ENCODE measurements at regions of chr16 and their contacts with region 1.

Region 1: DNA sequence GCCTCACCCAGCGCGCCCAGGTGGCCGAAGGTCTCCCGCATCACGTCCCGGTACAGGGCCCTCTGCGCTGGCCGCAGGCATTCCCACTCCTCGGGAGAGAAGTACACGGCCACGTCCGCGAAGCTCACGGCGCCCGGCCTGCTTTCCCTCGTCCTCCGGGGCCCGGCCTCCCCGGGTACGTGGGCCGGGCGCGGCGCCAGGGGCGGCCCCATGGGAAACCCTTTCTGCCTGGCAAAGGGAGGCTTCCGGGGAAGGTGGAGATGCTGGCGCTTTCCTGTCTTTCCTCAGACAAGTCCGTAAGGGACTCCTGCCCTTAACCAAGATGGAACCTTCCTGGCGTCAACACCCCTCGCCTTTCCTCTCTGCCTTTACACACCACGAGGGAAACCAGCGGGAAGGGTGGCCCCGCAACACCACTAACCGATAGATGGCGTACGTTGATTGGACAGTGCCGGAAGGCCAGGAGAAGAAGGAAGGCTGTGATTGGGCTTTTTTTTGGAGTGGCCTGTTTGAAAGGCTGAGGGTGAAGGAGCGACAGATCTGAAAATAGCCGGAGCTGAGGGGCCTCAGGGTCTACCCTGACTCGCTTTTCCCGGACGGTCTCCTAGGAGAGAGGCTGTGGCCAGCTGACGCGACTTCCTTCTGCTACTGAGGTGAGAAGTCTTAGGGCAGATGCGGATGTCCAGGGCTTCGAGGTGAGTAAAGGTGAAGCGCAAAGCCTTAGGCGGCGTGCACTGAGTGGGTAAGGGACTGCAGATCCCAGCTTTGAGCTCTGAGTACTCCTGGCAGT is at the start of gene ZNF785:
- DNase-seq: peak; percentile 96
- H3K4me3 Mint-ChIP-seq: peak within 1 kb of the TSS; percentile 77
- H3K27ac Mint-ChIP-seq: peak within 1 kb of the TSS; percentile 61
- H3K4me1 Mint-ChIP-seq: peaks cover 36% of the 10 kb centered on the region
- H3K27me3 Mint-ChIP-seq: no peaks in the 10 kb centered on the region
- total RNA-seq, gene ZNF785: 12.9 to 13.3 TPM

Region 2: GRCh38 chr16:30395992-30396585 is 189.5 kb before region 1 on chr16:
- CTCF ChIA-PET with region 1: no interaction called
- POLR2A ChIA-PET with region 1: no interaction called
- DNase-seq: no peak
- H3K4me3 Mint-ChIP-seq: peak overlapping the region; percentile 83
- H3K27ac Mint-ChIP-seq: peak overlapping the region; percentile 51
- H3K4me1 Mint-ChIP-seq: peaks cover 43% of the 10 kb centered on the region
- H3K27me3 Mint-ChIP-seq: no peaks in the 10 kb centered on the region

Region 3: DNA sequence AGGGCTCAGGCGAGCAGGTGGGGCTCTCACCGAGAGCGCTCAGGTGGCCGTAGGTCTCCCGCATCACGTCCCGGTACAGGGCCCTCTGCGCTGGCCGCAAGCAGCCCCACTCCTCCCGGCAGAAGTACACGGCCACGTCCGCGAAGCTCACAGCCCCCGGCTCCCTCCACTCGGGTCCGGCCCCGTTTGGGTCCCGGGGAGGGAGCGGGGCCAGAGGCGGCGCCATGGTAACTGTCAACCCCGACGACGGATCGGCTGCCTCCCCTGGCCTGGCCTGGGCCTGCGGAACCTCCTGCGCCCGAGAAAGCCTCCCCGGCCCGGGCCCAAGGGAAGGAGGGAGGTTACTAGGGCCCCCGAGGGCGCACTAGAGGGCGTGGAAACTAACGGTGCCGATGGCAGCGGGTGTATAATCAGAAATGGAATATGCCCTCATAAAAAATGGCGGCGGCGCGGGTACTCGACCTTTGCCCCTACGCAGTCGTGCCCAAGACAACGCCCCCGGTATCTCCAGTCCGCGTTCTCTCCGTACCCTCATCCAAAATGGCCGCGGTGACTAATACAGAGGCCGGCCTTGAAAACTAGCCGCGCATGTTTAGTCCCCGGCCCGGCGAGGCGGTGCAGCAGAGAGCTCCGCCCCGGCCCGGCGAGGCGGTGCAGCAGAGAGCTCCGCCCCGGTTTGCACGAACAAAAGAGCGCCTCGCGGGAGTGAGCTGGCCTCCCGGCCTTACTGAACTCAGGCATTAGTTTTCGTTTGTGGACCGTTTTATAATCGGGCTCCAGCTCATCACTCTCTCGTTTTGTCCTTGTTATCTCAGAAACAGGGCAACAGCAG is 27.4 kb before region 1 on chr16 and contains the start of gene ZNF764:
- CTCF ChIA-PET with region 1: interaction called, 13 read pairs
- POLR2A ChIA-PET with region 1: interaction called, 41 read pairs
- DNase-seq: peak; percentile 99
- H3K4me3 Mint-ChIP-seq: peak within 1 kb of the TSS; percentile 86
- H3K27ac Mint-ChIP-seq: peak within 1 kb of the TSS; percentile 90
- H3K4me1 Mint-ChIP-seq: peaks cover 51% of the 10 kb centered on the region
- H3K27me3 Mint-ChIP-seq: no peaks in the 10 kb centered on the region
- total RNA-seq, gene ZNF764: 16.0 to 16.8 TPM

Region 4: GRCh38 chr16:30609926-30610839 is 24.6 kb after region 1 on chr16 and contains the start of gene ZNF689:
- CTCF ChIA-PET with region 1: interaction called, 4 read pairs
- POLR2A ChIA-PET with region 1: interaction called, 13 read pairs
- DNase-seq: peak; percentile 96
- H3K4me3 Mint-ChIP-seq: peak within 1 kb of the TSS; percentile 83
- H3K27ac Mint-ChIP-seq: peak within 1 kb of the TSS; percentile 90
- H3K4me1 Mint-ChIP-seq: peaks cover 29% of the 10 kb centered on the region
- H3K27me3 Mint-ChIP-seq: no peaks in the 10 kb centered on the region
- total RNA-seq, gene ZNF689: 9.9 to 11.7 TPM

Region 5: GRCh38 chr16:30621765-30622164 is 36.2 kb after region 1 on chr16:
- CTCF ChIA-PET with region 1: no interaction called
- POLR2A ChIA-PET with region 1: no interaction called
- DNase-seq: no peak
- H3K4me3 Mint-ChIP-seq: no peak overlapping the region
- H3K27ac Mint-ChIP-seq: no peak overlapping the region
- H3K4me1 Mint-ChIP-seq: no peaks in the 10 kb centered on the region
- H3K27me3 Mint-ChIP-seq: peaks cover 35% of the 10 kb centered on the region